ENCODE measurements at regions of chr21 and their contacts with region 1.

Region 1: GRCh38 chr21:42381334-42381984 is 14.4 kb downstream of the TMPRSS3 start:
- DNase-seq: peak; percentile 81
- H3K4me3 Mint-ChIP-seq: no peak overlapping the region
- H3K27ac Mint-ChIP-seq: no peak overlapping the region
- H3K4me1 Mint-ChIP-seq: peaks cover 5% of the 10 kb centered on the region
- H3K27me3 Mint-ChIP-seq: no peaks in the 10 kb centered on the region

Region 2: DNA sequence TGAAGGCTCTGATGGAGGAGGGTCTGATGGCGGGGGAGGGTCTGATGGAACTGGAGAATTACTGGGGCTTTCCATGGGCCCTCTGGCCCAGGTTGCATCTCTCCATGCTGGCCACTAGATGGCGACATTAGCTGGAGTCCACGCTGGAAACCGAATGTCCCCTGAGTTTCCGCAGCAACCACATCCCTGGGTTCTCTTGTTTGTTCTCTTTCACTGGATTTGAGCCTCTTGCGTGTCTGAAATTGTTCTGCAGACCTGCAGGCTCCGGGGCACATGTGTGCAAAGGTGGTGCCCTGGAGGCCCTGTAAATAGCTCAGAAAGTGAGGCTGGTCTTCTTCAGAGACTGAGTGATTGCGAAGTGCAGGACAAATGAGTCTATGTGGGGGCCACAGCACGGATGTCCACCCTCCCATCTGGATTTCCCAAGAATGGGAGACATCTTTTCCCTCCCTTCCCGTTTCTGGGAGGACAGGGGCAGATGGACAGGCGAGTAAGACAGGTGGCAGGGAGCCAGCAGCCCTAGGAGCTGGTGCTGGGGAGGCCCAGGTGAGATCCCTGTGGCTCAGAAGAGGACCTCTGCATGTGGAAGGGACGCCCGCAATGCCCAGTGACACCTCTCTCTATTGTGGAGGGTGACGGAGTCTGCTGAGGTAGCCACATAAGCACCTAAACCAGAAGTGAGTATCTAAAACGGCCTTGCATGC is 235.7 kb before region 1 on chr21:
- CTCF ChIA-PET with region 1: interaction called, 4 read pairs
- intact Hi-C with region 1: loop called (anchors 2 kb)
- DNase-seq: peak; percentile 77
- H3K4me3 Mint-ChIP-seq: no peak overlapping the region
- H3K27ac Mint-ChIP-seq: no peak overlapping the region
- H3K4me1 Mint-ChIP-seq: peaks cover 7% of the 10 kb centered on the region
- H3K27me3 Mint-ChIP-seq: no peaks in the 10 kb centered on the region

Region 3: DNA sequence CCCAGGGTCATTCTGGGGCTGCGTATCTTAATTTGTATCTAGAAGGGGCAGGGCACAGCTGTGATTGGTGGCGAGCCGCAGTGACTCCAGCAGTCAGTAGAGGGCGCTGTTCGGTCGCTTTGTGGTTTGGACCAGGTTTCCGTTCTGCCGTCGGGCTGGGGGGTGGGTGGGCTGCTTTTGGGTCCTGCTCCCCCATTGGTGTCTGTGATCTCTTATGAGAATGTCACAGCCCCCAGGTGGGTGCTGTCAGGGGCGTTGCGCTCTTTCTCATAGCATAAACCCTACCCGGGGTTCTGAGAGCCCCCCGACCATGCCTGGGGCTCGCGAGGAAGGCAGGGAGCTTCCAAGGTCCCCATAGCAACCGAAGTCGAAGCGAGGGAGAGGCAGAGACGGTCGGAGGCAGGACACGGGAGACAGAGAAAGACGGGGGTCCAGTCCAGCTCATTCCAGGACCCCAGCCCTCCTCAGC is 71.7 kb before region 1 on chr21:
- CTCF ChIA-PET with region 1: interaction called, 5 read pairs
- intact Hi-C with region 1: loop called (anchors 1 kb)
- DNase-seq: peak; percentile 86
- H3K4me3 Mint-ChIP-seq: no peak overlapping the region
- H3K27ac Mint-ChIP-seq: no peak overlapping the region
- H3K4me1 Mint-ChIP-seq: peaks cover 3% of the 10 kb centered on the region
- H3K27me3 Mint-ChIP-seq: peaks cover 2% of the 10 kb centered on the region

Region 4: GRCh38 chr21:42392721-42393442 is 11.4 kb after region 1 on chr21:
- CTCF ChIA-PET with region 1: interaction called, 18 read pairs
- intact Hi-C with region 1: no loop called
- DNase-seq: peak; percentile 62
- H3K4me3 Mint-ChIP-seq: peak overlapping the region; percentile 13
- H3K27ac Mint-ChIP-seq: peak overlapping the region; percentile 58
- H3K4me1 Mint-ChIP-seq: peaks cover 44% of the 10 kb centered on the region
- H3K27me3 Mint-ChIP-seq: no peaks in the 10 kb centered on the region

Region 5: DNA sequence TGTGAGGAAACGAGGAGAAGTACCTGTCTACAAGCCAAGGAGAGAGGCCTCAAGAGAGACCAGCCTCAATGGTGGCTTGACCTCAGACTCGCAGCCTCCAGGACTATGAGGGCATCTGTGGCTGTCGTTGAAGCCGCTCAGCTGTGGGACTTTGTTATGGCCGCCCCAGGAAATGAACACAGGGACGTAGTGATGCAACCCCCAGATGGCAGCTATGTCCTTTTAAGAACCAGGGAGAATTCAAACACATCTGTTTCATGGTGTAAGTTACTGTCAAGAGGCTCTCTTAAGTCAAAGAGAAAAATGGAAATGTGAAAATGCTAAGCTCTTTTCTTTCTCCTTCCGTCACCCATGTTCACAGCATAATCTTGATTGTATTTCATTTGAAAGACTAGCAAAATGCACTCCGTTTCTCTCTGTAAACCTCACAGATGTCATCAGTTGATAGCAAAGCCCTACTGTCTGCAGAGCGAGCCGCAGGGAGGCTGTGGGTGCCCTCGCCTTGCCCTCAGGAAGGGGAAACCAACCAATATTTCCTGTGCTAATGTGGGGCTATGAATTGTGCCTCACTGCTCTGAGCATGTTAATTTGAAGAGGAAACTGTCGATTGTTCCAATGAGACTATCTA is 43.6 kb after region 1 on chr21:
- CTCF ChIA-PET with region 1: interaction called, 20 read pairs
- intact Hi-C with region 1: no loop called
- DNase-seq: peak; percentile 75
- H3K4me3 Mint-ChIP-seq: peak overlapping the region; percentile 44
- H3K27ac Mint-ChIP-seq: peak overlapping the region; percentile 61
- H3K4me1 Mint-ChIP-seq: peaks cover 67% of the 10 kb centered on the region
- H3K27me3 Mint-ChIP-seq: no peaks in the 10 kb centered on the region

Region 6: DNA sequence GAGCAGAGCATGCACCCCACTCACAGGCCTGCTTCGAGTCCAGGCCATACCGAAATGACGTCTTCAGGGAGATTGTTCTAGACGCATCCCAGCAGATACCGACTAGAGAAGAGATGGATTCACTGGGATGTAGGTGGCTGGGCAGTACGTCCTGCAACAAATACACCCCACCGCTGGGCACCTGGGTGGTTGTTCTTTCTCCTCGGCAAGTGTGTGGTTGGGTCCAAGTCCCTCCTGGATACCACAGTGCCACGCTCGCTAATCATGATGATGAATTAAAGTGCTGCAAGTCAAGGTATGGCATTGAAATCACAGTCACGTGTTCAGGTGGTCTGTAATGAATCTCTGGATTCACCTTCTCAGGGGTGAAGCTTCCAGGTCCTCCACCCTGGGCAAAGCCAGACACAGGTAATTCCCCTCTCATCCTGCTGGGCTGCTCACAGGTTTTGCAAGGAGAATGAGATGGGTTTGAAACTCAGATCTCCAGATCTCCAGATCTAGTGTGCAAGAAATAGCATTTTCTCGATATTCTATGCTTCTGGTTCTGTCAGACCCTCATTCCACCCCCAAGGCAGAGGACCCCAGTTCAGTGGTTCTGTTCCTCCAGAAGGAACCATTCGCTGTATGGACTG is 68.0 kb after region 1 on chr21:
- CTCF ChIA-PET with region 1: interaction called, 23 read pairs
- intact Hi-C with region 1: loop called (anchors 1 kb)
- DNase-seq: no peak
- H3K4me3 Mint-ChIP-seq: no peak overlapping the region
- H3K27ac Mint-ChIP-seq: peak overlapping the region; percentile 86
- H3K4me1 Mint-ChIP-seq: peaks cover 34% of the 10 kb centered on the region
- H3K27me3 Mint-ChIP-seq: no peaks in the 10 kb centered on the region

Region 7: GRCh38 chr21:42537106-42537742 is 155.8 kb after region 1 on chr21:
- CTCF ChIA-PET with region 1: no interaction called
- intact Hi-C with region 1: loop called (anchors 2 kb)
- DNase-seq: peak; percentile 54
- H3K4me3 Mint-ChIP-seq: no peak overlapping the region
- H3K27ac Mint-ChIP-seq: no peak overlapping the region
- H3K4me1 Mint-ChIP-seq: peaks cover 16% of the 10 kb centered on the region
- H3K27me3 Mint-ChIP-seq: no peaks in the 10 kb centered on the region

Measured in activated naive CD4-positive, alpha-beta T cell treated with anti-CD3 and anti-CD28 coated beads for 36 hours (primary cell).